BJ (cell line): ENCODE measurements at regions of chr1 and their contacts with region 1.

Region 1: DNA sequence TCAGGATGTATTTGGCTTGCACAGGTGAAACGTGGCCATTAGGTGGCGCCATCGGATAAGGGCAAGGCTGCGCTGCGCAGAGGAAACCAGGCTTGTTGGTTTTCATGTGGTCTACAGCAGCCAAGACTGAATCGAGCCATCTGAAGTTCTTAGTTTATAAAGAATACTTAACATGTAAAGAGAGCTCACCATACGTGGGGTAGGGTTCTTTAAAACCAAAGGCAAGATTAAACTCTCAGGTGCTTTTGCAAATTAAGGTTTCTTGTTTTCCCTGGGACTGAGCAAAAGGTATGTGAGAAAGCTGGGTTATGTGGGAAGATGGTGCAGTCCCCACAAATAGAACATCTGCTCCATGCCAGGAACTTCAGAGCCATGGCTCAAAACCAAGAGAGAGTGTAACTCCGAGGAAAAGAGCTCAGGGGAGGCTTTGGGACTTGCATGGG is 9.3 kb downstream of the MASP2 start:
- DNase-seq: peak; percentile 26
- H3K4me3 ChIP-seq: no peak overlapping the region
- H3K27me3 ChIP-seq: peaks cover 4% of the 10 kb centered on the region
- CTCF ChIP-seq: peak; percentile 96

Region 2: DNA sequence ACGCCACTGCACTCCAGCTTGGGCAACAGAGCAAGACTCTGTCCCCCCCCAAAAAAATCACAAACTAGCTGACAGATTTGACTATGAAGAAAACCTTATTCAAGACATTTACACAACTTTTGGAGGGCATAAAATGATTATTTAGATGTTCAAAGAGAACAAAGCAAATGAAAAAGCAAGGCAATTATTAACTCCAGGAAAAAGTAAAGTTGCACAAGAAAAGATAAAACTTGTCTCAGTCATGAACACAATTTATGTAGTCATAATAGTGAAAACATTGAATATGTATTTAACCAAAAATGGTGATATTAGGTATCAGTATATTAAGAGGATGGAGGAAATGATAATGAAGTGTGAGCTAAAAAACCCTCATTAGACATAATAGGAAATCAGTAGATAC is 37.2 kb before region 1 on chr1:
- CTCF ChIA-PET with region 1: no interaction called
- POLR2A ChIA-PET with region 1: no interaction called
- DNase-seq: no peak
- H3K4me3 ChIP-seq: no peak overlapping the region
- H3K27me3 ChIP-seq: no peaks in the 10 kb centered on the region
- CTCF ChIP-seq: no peak

Region 3: DNA sequence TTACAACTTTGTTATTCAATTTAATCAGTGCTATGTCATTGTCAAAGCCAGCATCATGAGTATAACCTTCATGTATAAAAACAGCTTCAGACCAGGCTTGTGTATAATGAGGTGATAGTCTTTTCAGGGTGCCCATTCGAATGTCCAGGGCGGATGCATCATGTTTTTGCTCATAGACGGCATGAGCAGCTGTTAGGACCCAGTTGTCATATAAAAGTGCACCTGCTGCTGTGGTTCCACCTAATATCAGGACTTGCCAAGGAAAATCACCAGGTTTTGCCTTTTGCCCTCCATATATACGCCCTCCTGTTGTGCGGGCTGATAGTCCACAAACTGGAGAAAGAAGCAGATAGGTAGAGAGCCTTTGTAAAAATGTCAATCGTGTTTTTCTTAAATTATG is 10.4 kb before region 1 on chr1:
- CTCF ChIA-PET with region 1: interaction called, 11 read pairs
- POLR2A ChIA-PET with region 1: no interaction called
- DNase-seq: no peak
- H3K4me3 ChIP-seq: no peak overlapping the region
- H3K27me3 ChIP-seq: no peaks in the 10 kb centered on the region
- CTCF ChIP-seq: no peak

Region 4: DNA sequence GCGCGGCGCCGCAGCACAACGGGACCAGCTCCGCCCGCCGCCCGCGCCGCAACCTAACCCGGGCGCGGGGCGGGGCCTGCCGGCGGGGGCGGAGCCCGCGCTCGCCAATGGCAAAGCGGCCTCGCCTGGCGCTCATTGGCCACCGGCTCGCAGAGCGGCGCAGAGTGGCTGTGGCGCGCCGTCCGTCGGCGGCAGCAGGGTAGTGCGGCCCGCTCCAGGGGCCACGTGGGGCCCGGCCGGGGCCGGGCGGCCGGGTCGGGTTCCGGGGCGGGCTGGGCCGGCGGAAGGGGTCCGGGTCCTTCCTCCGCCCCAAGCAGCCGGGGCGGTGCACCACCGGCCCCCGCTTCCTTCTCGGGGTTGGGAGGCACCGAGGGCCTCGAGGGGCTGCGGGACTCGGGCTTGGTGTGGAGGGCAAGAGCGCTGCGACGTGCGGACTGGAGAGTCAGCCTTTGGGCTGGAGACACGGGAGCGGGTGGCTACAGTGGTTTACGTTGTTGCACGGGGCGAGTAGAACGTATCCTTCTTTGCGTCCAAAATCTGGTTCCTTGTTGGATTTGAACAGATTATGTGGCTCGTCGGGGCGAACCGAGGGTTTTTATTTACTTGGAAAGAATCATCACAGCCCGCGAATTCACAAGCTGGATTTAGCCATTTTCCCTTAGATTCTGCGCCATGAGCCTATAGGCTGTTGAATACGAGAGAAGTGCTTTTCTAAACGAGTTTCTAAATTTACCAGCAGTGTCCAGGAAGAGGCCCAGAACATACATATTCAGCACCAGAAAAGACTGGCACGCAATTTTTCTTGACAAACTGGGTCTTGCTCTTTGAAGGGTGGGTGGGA is 22.4 kb after region 1 on chr1 and contains the start of gene SRM:
- CTCF ChIA-PET with region 1: interaction called, 17 read pairs
- POLR2A ChIA-PET with region 1: no interaction called
- DNase-seq: peak; percentile 55
- H3K4me3 ChIP-seq: peak within 1 kb of the TSS; percentile 96
- H3K27me3 ChIP-seq: no peaks in the 10 kb centered on the region
- CTCF ChIP-seq: no peak
- polyA plus RNA-seq, gene SRM: 47.5 and 75.2 TPM in 2 replicates

Region 5: DNA sequence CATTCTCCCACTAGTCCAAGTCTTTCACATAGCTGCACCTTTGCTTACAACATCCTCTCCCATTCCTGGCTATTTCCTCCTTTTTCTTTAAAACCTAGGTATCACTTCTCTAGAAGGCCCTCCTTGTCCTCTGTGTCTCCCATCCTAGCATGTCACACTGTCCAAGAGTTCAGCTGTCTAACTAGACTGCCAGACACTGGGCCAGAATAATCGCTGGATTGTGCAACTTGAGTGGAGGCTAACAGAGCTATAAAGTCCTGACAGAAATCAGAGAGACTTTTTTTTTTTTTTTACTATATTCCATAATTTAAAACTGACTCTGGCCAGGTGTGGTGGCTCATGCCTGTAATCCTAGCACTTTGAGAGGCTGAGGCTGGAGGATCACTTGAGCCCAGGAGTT is 147.2 kb after region 1 on chr1:
- CTCF ChIA-PET with region 1: interaction called, 11 read pairs
- POLR2A ChIA-PET with region 1: no interaction called
- DNase-seq: no peak
- H3K4me3 ChIP-seq: no peak overlapping the region
- H3K27me3 ChIP-seq: no peaks in the 10 kb centered on the region
- CTCF ChIP-seq: no peak

Region 6: DNA sequence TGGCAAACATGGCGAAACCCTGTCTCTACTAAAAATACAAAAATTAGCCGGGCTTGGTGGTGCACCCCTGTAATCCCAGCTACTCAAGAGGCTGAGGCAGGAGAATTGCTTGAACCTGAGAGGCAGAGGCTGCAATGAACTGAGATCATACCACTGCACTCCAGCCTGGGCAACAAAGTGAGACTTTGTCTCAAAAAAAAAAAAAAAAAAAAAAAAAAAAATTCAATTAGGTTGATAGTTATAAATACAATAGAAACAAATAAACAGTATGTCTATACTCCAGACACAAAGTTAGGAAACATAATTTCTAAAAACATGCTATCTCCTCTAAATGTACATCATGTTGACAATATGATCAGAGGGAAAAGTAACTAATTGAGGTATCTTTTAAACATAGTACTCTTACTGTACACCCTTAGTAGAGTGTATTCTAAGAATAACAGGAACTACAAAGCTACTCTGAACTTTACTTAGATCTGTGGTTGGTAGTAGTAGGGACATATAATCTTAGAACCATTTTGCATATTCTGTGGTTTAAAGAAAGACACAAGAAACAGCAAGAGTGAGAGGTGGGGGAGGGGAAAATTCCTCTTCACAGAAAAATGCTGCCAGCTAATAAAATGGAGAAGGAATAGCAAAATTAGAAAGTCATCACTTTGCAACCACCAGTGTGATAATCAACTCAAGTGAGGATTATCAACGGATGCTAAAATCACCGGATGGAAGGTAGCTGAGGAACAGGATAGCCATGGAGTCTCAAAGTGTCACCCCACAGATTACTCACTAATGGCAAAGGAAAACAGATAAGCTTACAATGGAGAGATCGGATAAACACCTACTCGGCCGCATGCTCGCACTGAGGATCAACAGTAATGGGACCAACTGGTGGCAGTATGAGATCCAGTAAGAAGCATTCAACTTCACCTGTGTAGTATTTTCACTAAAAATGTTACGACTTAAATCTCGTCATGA is 189.6 kb after region 1 on chr1:
- CTCF ChIA-PET with region 1: interaction called, 10 read pairs
- POLR2A ChIA-PET with region 1: no interaction called
- DNase-seq: no peak
- H3K4me3 ChIP-seq: no peak overlapping the region
- H3K27me3 ChIP-seq: no peaks in the 10 kb centered on the region
- CTCF ChIP-seq: no peak

Region 7: DNA sequence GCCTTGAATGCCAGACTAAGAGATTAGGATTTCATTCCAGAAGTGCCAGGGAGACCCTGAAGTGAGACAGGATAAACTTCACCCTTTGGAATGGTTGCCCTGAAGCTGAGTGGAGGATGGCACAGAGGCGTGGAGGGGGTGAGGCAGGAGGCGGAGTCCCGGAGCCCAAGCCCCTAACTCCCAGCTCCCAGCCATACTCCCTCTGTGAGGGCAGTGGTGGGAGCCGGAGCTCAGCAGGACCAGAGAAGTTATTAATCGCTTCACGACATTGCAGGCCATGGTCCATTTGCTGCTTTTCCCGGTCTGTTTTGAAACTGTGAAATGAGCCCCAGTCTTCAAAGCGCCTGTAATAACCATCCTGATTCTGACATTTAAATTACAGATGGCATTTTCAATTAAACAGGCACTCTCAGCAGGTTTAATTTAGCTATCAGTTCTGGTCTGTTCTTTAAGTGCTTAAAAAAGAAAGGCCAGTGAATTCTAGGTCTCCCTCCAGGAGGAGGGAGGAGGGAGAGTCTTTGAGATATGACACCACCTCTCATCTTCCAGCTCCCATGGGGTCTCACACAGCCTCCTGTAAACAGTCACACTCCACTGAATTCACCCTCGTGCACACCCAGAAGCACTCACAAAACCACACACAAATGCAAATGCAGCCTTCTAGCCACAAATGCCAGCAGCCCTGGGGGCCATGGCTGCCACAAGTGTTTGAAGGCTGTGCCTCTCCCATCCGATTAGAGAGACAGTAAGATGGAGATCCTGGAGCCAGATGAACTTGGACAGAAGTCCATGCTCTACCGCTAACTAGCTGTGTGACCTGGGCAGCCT is 596.8 kb after region 1 on chr1:
- CTCF ChIA-PET with region 1: interaction called, 15 read pairs
- POLR2A ChIA-PET with region 1: no interaction called
- DNase-seq: no peak
- H3K4me3 ChIP-seq: no peak overlapping the region
- H3K27me3 ChIP-seq: peaks cover 4% of the 10 kb centered on the region; the same call in 1 of the 2 replicates
- CTCF ChIP-seq: no peak

Region 8: DNA sequence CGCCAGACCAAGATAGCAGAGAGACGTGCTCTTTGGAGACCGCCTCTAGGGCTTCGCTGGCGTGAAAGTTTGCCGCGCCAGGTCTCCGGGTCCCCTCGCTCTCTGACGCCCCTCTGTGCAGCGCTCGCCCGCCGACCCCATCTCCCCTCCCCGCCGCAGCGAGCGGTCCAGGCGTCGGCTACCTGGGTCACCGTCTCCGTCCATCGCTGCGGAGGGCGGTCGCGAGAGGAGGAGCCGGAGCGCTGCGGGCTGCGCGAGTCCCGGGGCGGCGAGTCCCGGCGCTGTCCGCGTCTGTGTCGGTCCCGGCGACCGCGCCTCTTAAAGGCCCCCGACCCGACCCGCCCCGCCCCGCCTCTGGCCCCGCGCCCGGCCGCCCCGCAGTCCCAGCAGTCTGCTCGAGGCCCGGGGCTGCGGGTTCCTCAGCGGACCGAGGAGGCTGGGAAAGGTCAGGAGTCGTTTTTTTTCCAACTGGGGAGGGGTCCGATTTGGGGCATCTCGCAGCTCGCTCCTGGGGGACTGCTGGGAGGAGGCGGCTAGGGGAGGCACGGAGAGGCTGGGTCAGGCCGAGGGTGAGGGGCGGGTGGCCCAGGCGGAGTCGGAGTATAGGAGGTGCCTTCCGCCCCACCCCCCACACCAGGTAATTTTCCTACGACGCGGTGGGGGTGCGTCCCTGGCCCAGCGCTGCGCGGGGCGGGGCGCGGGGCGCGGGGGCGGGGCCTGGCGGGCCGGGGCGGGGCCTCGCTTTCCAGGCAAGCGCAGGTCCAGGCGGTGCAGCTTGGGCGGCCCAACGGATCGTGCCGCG is 616.6 kb after region 1 on chr1 and contains the starts of genes FBXO2 and FBXO44:
- CTCF ChIA-PET with region 1: interaction called, 192 read pairs
- POLR2A ChIA-PET with region 1: no interaction called
- DNase-seq: no peak
- H3K4me3 ChIP-seq: peak within 1 kb of the TSS; percentile 84
- H3K27me3 ChIP-seq: 0 out of 2 replicates have a peak, but pooled peaks cover 4% of the 10 kb centered on the region
- CTCF ChIP-seq: no peak
- polyA plus RNA-seq, gene FBXO2: 1.5 and 2.2 TPM in 2 replicates
- polyA plus RNA-seq, gene FBXO44: 15.1 and 24.4 TPM in 2 replicates